Psoas muscle (tissue), 8 donors: ENCODE measurements at regions of chr1 and their contacts with region 1.

Region 1: DNA sequence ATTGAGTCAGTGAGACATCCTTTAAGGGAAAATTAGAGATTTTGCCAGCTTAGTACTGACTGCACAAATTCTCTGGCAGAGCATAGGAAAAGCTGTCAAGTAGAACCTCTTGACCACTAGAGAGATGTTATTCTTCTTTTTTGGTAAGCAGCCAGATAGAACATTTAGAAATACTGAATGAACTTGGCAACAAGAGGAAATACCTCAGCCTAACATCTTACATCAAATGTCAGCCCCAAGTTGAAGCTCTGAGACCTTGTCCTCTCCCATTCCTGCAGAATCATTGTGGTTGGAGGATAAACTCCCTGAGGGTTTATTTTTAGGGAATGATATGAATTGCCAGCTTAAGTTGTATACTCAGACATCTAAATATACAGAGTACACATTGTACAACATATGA is 53.5 kb downstream of the MIGA1 start:
- DNase-seq: no peak
- ATAC-seq: peak; percentile 80 to 94 (median 84)
- H3K4me3 ChIP-seq: peak overlapping the region; percentile 35
- H3K27ac ChIP-seq: peak overlapping the region; percentile 98
- H3K4me1 ChIP-seq: peaks cover 72% of the 10 kb centered on the region
- H3K27me3 ChIP-seq: no peaks in the 10 kb centered on the region
- CTCF ChIP-seq: no peak

Region 2: DNA sequence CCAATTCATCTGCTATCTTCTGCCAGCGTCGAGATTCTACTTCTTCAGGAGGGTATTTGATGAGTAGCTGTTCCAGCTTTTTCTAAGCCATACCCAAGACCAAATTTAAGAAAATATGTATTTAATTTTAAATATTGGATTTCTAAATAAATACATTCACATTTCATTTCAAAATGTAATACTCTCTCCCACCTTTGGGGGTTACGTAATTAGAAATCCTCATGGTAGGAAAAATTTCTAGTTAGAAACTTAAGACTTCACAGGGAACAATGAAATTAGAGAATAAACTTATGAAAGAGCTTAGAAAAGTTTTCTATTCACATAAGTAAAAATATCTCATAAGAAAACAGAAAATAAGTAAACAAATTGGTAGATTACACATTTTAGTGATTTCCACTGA is 253.4 kb before region 1 on chr1:
- intact Hi-C with region 1: no loop called
- DNase-seq: no peak
- ATAC-seq: no peak
- H3K4me3 ChIP-seq: no peak overlapping the region
- H3K27ac ChIP-seq: no peak overlapping the region
- H3K4me1 ChIP-seq: no peaks in the 10 kb centered on the region
- H3K27me3 ChIP-seq: no peaks in the 10 kb centered on the region
- CTCF ChIP-seq: no peak

Region 3: GRCh38 chr1:77888081-77888780 is 55.3 kb after region 1 on chr1 and contains the start of gene NEXN:
- intact Hi-C with region 1: loop called (anchors 1 to 2 kb)
- DNase-seq: peak; percentile 89 to 95
- ATAC-seq: peak; percentile 81 to 89 (median 84)
- H3K4me3 ChIP-seq: peak within 1 kb of the TSS; percentile 88
- H3K27ac ChIP-seq: peak within 1 kb of the TSS; percentile 100
- H3K4me1 ChIP-seq: peaks cover 26% of the 10 kb centered on the region
- H3K27me3 ChIP-seq: no peaks in the 10 kb centered on the region
- CTCF ChIP-seq: no peak
- total RNA-seq, gene NEXN: 161 to 541 (median 362) TPM